Caki2 (cell line): ENCODE measurements at regions of chr19 and their contacts with region 1.

Region 1: DNA sequence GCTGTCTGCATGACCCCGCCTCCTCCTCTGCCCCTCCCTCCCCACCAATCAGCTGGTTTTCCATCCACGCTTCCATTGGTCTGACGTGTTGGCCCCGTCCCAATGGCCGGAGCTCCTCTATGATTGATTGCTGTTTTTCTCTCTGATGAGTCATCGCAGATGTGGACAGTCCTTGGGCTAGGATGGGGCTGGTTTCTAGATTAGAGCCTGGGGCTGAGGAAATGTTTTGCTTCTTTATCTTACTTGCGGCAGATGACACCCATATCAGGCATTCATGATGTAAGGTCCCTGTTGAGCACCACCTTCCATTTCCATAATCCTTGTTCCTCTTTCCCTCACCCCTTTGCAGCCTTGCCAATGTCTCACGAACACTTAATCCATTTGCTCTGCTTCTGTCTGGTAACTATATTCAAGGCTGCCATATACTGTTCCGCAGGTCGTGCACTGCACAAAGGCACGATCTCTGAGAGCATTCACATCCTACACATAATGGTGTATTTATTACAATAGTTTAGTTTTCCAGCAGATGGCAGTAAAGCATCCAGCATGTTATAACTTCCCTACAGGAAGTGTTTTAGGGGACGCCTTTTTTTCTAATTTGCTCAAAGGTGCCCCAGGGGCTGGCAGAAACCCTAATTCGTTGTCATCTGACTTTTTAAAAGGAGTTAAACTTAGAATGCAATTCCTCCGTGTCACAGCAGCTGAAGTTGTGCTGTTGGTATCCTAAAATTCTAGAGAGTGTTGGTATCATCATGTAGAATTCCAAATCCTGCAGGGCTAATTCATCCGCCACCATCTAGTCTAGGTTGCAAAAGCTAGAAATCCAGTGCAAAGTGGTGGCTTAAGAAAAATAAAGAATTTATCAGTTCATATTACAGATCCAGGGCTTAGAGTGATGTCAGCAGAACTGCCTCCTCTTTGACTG is 73.5 kb downstream of the MAP4K1 start:
- DNase-seq: peak; percentile 99

Region 2: GRCh38 chr19:38417544-38418506 is 126.5 kb before region 1 on chr19:
- in situ Hi-C with region 1: no loop called
- DNase-seq: no peak

Region 3: GRCh38 chr19:38792250-38793111 is 248.2 kb after region 1 on chr19:
- in situ Hi-C with region 1: loop called (anchors 25 kb)
- DNase-seq: no peak